ENCODE measurements at regions of chr10 and their contacts with region 1.

Region 1: DNA sequence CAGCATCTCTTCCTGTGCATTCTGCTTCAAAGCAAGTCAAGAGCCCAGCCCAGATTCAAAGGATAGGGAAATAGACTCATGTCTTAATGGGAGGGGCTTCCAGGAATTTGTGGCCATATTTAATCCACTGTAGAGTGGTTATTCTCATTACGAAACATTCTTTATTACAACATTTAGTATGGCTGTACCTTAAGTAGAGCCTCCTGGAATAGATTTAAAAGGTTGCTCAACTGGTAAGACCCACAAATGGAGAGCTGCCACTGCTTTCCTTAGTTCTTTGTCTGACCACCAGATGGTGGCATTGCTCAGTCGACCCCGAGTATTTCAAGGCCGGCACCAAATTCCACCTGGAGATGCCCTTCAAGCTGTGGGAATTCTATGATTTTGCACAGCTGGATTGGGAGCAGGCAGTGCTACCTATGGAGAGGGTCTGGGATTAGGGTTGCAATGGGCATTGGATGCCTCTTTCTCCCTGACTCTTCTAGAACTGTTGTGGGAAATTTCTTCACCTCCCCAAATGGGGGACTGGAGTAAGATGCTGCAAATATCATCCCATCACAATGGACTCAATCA is 102.2 kb downstream of the RBM20 start:
- DNase-seq: peak in 1 of 2 donors; percentile 66
- ATAC-seq: peak; percentile 37 to 76 (median 67)
- H3K4me3 ChIP-seq: no peak overlapping the region
- H3K27ac ChIP-seq: peak overlapping the region in 8 of 10 donors; percentile 6 to 86 (median 52)
- H3K4me1 ChIP-seq: peaks cover 8 to 76% (median 39%) of the 10 kb centered on the region in 9 donors
- H3K27me3 ChIP-seq: no peaks in the 10 kb centered on the region
- CTCF ChIP-seq: peak; percentile 57 to 89 (median 81)

Region 2: GRCh38 chr10:110410329-110411046 is 335.9 kb before region 1 on chr10:
- intact Hi-C with region 1: no loop called
- DNase-seq: no peak
- ATAC-seq: peak in 7 of 8 donors; percentile 17 to 46 (median 29)
- H3K4me3 ChIP-seq: no peak overlapping the region
- H3K27ac ChIP-seq: peak overlapping the region in 2 of 10 donors; percentile 19 to 44
- H3K4me1 ChIP-seq: peaks cover 0 to 50% (median 24%) of the 10 kb centered on the region in 9 donors
- H3K27me3 ChIP-seq: no peaks in the 10 kb centered on the region
- CTCF ChIP-seq: no peak

Region 3: DNA sequence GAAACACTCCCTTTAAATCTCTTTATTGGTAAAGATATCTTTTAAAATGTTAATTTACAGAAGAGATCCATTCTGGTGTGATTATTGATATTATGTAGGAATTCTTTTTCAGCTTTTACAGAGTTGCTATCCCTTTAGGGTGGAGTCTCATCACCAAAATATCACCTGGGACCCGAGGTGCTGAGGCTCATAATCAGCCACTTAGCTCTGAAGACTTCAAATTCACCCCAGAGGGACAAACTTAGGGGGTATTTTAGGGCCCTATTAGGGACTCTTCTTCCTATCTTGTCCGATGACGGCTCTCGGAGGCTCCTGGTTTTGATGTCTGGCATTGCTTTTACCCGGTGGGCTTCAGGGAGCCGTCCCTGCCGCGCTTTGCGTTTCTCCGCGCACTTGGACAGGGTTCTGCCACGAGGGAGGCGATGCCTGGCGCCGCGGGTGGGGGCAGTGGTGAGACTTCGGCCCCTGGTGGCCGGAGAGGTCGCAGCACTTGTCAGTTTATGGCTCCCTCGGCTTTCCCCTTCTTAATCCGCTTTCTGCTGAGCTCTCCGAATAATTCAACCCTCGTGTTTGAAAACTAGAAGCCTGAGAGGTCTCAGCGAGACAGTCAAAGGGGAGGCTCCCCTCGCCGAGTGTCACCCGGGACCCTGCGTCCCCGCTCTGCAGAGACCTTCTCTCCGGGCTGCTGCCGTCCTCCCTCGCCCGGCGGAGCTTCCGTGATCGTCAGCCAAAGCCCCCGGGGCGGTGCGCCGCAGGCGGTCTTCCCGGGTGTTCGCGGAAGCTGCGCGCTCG is 74.4 kb before region 1 on chr10:
- intact Hi-C with region 1: no loop called
- DNase-seq: peak; percentile 69 to 75
- ATAC-seq: peak; percentile 77 to 90 (median 86)
- H3K4me3 ChIP-seq: peak overlapping the region; percentile 26 to 70 (median 61)
- H3K27ac ChIP-seq: peak overlapping the region; percentile 64 to 94 (median 88)
- H3K4me1 ChIP-seq: peaks cover 4 to 87% (median 36%) of the 10 kb centered on the region in 9 donors
- H3K27me3 ChIP-seq: no peaks in the 10 kb centered on the region
- CTCF ChIP-seq: peak; percentile 62 to 96 (median 86)

Region 4: DNA sequence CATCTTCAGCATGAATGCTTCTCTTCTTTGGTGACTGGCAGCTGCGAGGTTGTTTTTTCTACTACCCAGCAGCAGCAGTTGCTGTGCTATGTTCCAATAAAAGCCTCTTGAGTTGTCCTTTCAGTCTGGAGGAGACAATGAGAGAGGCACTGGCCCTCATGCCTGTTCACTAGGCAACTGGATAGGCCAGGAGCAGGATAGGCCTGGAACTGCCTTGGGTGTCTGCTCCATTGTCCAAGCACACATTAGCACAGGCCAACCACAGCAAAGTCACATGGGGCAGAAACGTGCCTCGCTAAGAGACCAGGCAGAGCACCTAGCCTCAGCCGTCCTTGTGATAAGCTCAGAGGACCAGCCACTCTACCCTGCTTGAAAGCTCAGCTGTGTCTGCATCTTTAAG is 48.5 kb after region 1 on chr10:
- intact Hi-C with region 1: loop called in 1 of 10 experiments (anchors 5 kb)
- DNase-seq: peak; percentile 43 to 74
- ATAC-seq: peak; percentile 87 to 96 (median 94)
- H3K4me3 ChIP-seq: no peak overlapping the region
- H3K27ac ChIP-seq: peak overlapping the region in 9 of 10 donors; percentile 17 to 76 (median 70)
- H3K4me1 ChIP-seq: peaks cover 8 to 76% (median 33%) of the 10 kb centered on the region in 9 donors
- H3K27me3 ChIP-seq: no peaks in the 10 kb centered on the region
- CTCF ChIP-seq: no peak

Region 5: GRCh38 chr10:110803830-110804338 is 57.5 kb after region 1 on chr10:
- intact Hi-C with region 1: loop called in 2 of 10 experiments (anchors 5 kb)
- DNase-seq: peak in 1 of 2 donors; percentile 35
- ATAC-seq: peak in 7 of 8 donors; percentile 60 to 80 (median 69)
- H3K4me3 ChIP-seq: no peak overlapping the region
- H3K27ac ChIP-seq: peak overlapping the region in 6 of 10 donors; percentile 9 to 52 (median 37)
- H3K4me1 ChIP-seq: peaks cover 12 to 62% (median 26%) of the 10 kb centered on the region in 9 donors
- H3K27me3 ChIP-seq: no peaks in the 10 kb centered on the region
- CTCF ChIP-seq: peak; percentile 27 to 74 (median 59)

Region 6: DNA sequence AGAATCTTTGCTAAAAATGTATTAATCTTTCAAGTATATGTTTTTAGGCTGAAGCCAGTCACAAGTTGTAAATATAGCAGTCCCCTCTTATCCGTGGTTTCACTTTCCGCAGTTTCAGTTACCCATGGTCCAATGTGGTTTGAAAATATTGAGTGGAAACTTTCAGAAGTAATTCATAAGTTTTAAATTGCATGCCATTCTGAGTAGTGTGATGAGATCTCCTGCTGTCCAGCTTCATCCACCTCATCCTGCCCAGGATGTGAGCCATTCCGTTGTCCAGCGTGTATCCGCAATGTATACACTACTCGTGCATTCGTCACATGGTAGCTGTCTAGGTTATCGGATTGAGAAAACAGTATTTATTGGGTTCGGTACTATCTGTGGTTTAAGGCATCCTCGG is 137.6 kb after region 1 on chr10:
- intact Hi-C with region 1: loop called in 1 of 10 experiments (anchors 5 kb)
- DNase-seq: no peak
- ATAC-seq: no peak
- H3K4me3 ChIP-seq: no peak overlapping the region
- H3K27ac ChIP-seq: no peak overlapping the region
- H3K4me1 ChIP-seq: peaks cover 0 to 27% (median 12%) of the 10 kb centered on the region in 9 donors
- H3K27me3 ChIP-seq: no peaks in the 10 kb centered on the region
- CTCF ChIP-seq: no peak

Region 7: DNA sequence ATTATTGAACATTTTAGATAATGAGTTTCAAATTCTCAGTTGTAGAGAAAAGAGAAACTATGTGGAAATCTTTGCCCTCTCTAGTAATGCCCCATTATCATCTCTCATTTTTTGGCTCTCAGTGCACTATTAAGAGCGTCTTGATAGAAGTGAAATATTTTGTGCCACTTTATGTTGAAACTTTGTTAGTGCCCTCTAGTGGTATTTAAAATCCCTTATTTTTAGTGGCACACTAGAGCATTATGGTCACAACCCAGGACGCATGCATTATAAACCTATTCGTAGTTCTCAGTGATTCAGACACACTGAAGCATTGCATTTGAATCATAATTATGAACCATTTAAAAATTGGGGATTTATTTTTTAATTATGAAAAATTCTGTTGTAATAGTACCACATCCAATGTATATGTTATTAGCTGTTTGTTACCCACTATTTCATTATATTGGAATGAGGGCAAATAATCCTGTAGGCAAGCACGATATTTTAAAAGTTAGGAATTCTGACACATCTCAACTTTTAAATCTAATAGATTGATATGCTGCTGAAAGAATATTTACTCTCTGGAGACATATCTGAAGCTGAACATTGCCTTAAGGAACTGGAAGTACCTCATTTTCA is 147.3 kb after region 1 on chr10:
- intact Hi-C with region 1: loop called in 9 of 10 experiments (anchors 1 to 5 kb)
- DNase-seq: no peak
- ATAC-seq: peak; percentile 69 to 88 (median 82)
- H3K4me3 ChIP-seq: no peak overlapping the region
- H3K27ac ChIP-seq: no peak overlapping the region
- H3K4me1 ChIP-seq: peaks cover 0 to 18% (median 5%) of the 10 kb centered on the region in 9 donors
- H3K27me3 ChIP-seq: no peaks in the 10 kb centered on the region
- CTCF ChIP-seq: peak; percentile 31 to 76 (median 61)